Right ventricle myocardium inferior (tissue), 1 donor: ENCODE measurements at regions of chr6 and their contacts with region 1.

Region 1: DNA sequence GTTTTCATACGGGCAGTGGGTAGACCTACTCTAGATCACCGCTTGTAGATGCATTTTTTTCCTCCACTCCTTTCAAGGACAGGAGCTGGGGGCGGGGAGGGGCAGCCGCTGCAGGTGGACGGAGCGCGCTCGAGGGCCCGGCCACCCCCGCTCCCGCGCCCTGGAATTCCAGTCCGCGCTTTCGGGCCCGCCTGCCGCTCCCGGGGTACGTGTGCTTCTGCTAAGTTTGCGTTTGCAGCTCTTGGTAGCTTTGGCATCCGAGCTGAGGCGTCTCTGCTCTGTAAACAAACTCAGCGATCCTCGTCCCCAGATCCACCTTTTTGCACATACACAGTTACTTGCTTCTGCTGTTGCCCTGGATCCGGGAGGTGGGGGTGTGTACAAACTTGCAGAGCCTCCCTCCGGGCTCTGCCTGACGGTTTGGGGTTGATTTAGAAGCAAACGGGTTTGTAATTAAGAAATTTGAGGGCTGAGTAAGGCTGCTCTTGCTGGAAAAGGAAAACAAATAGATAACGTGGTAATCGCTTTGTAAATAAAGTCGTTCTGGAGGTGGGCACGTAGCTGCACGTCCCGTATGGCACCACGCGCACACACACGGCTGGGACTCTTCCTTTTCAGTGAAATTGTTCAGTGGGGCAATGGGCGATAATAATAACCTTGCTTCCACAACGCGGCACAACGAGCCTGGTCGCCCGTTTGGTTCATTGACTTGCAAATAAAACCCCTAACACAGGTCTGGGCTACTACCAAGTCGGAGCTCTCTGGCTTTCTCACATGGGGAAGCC is 976 bp upstream of the CITED2 start:
- DNase-seq: peak; percentile 95
- ATAC-seq: peak; percentile 84

Region 2: DNA sequence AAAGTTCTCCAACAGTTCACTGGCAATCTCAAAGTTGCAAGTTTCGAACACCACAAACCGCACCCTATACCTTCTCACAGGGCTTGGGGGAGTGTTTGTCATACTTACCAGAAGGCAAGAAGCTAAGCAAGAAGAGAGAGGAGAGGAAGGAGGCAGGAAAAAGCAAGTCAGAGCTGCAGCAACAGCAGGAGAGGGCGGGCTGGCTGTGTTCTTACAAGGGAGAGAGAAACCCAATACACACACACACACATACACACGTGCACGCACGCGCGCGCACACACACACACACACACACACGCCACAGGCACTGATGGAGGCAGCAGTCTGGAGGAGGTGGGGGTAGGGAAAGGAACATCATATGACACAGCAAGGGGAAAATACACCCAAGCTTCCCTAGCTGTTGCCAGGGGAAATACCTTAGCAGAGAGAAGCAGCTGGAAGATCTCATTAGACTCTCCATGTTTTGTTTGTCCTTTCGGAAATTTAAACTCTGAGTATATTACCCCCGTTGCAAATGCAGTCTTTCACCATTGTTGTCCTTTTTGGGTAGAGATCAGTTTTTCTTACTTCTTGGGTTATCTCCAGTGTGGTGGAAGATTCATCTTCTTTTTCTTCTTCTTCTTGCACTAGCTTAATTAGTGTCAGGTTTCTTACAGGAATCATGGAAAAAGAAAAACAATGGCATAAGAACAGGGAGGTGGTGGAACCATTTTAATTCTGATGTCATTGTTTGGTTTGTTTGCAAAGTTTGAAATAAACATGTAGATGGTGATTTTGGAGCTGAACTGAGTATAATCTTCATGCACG is 83.4 kb before region 1 on chr6 and contains the start of gene TXLNB:
- intact Hi-C with region 1: loop called (anchors 5 kb)
- DNase-seq: peak; percentile 92
- ATAC-seq: peak; percentile 88
- total RNA-seq, gene TXLNB: 122 TPM

Region 3: GRCh38 chr6:139355172-139355571 is 20.3 kb before region 1 on chr6:
- intact Hi-C with region 1: no loop called
- DNase-seq: no peak
- ATAC-seq: no peak

Region 4: DNA sequence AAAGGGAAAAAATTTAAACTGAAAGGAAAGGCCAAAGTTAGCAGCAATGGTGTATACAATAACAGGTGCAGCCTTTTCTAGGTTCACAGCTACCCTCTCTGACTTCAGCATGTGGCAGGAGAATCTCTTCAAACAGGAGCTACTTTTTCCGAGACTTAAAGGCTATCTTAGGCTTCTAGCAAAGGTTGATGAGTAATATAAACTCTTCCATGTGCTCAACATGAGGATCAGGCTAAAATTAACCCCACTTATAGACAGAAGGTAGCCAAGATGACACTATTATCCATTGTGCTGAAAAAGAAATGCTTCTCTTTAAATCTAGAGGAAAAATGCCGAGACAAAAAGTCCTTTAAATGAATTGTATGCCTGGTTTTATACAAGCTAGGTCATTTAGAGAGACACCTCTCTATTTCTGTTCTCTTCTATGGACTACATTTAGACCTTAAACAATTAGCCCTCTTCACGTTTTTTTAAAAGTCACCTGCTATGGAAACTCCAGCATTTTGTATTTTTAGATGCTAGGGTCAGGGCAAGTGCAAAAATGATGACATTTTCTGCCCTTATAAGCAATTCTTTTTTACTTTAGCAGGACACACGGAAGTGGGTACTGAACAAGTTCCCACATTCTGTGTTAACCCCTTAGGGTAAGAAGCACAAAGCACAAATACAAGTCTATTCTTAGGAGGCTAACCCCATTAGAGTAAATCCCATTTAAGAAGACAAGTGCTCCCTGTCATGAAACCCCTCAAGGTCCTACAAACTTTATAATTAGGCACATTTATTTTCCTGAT is 215.8 kb after region 1 on chr6:
- intact Hi-C with region 1: loop called (anchors 5 kb)
- DNase-seq: no peak
- ATAC-seq: no peak

Region 5: GRCh38 chr6:139881728-139882211 is 506.3 kb after region 1 on chr6:
- intact Hi-C with region 1: loop called (anchors 5 kb)
- DNase-seq: peak; percentile 73
- ATAC-seq: peak; percentile 52

Region 6: DNA sequence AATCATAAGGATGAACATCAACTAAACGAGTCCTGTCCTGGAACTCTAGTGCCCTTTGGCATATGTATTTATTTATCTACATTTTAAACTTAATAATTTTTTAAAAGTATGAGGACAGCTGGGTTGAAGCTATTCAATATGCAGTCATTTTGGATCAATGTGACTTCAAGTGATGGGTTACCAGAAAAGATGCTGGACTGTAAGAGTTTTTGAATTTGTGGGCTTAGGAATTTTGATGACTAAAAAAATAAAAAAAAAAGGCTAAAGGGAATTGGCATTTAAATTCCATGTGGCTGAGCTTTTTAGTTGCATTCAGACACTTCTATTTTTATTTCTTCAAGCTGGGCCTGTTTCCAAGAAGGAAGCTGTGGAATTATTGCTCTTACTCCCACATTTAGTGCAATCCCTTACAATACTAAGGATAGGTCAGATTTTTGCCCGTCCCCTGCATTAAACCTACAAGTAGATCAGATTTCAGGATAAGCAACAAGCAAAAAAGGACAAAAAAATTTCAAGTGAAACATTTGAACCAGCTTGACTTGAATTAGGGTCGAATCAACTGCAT is 703.2 kb after region 1 on chr6:
- intact Hi-C with region 1: loop called (anchors 2 kb)
- DNase-seq: no peak
- ATAC-seq: peak; percentile 57

Region 7: GRCh38 chr6:140441256-140441655 is 1065.8 kb after region 1 on chr6:
- intact Hi-C with region 1: loop called (anchors 2 kb)
- DNase-seq: peak; percentile 44
- ATAC-seq: peak; percentile 92

Region 8: DNA sequence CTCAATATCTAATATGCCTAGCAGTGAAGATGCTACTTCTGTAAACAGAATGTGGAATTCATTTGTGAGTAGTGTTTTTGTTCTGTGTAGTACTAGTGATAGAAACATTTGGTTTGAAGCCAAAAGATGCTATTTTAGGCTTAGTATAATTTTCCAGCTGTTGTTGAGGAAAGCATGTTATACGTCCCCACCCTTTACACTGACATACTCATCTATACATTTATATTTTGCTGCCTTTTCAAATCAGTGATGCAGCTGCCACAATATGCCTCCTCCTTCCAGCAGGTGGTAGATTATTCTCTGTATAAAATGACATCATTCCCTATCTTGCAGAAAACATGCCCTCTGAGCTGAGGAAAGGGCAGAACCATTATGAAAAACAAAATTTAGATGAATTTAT is 1539.7 kb after region 1 on chr6:
- intact Hi-C with region 1: loop called (anchors 5 kb)
- DNase-seq: no peak
- ATAC-seq: no peak